Psoas muscle (tissue), 8 donors: ENCODE measurements at regions of chr5 and their contacts with region 1.

Region 1: DNA sequence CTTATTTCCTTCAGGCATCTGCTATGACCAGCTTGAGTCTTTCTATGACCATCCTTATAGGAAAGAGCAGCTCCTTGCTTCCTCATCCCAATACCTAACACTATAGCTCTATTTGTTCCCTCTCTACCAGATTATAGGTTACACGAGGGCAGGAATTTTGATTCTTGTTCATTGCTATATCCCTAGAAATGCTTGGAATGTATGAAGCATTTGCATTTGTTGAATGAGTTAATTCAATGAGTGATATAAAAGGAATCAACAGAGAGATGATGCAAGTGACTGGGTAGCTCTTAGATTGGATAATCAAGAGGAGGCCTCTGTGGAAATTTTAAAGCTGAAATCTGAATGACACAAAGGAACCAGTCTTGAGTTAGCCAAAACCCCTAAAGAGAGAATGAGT is 13.9 kb downstream of the ZCCHC9 start:
- DNase-seq: no peak
- ATAC-seq: no peak
- H3K4me3 ChIP-seq: no peak overlapping the region
- H3K27ac ChIP-seq: no peak overlapping the region
- H3K4me1 ChIP-seq: no peaks in the 10 kb centered on the region
- H3K27me3 ChIP-seq: no peaks in the 10 kb centered on the region
- CTCF ChIP-seq: no peak

Region 2: DNA sequence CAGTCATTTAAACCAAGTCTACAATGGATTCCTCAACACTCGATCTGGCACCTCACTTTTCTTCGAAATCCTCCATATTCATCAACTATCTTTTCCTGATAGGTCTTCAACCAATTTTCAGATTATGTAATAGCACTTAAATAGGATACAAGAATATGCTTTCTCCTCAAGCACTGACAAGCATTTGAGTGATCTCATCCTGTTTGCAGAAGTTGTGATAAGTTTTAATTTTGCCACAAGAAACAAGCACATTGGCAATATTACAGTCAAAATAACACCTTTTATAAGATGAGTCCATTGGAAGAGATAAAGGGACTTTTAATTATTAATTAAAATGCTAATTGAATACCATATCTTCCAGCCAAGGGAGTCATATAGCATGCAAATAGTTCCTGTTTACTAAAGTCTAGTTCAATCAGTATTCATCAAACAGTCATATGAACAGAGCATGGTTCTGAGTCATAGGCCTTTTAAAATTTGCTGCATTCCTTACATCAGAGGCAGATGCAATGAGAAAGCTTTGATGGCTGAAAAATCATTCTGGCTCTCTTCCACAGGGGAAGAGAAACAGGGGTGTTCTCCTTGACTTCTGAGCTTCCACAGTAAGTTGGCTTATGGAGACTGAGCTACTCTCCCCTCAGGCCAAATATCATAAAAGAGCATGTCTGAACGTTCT is 46.7 kb before region 1 on chr5:
- intact Hi-C with region 1: loop called in 1 of 2 experiments (anchors 1 kb)
- DNase-seq: no peak
- ATAC-seq: peak in 2 of 4 donors; percentile 10 to 18
- H3K4me3 ChIP-seq: no peak overlapping the region
- H3K27ac ChIP-seq: no peak overlapping the region
- H3K4me1 ChIP-seq: no peaks in the 10 kb centered on the region
- H3K27me3 ChIP-seq: no peaks in the 10 kb centered on the region
- CTCF ChIP-seq: no peak

Region 3: GRCh38 chr5:81371354-81371876 is 56.1 kb after region 1 on chr5:
- intact Hi-C with region 1: no loop called
- DNase-seq: no peak
- ATAC-seq: no peak
- H3K4me3 ChIP-seq: no peak overlapping the region
- H3K27ac ChIP-seq: no peak overlapping the region
- H3K4me1 ChIP-seq: no peaks in the 10 kb centered on the region
- H3K27me3 ChIP-seq: no peaks in the 10 kb centered on the region
- CTCF ChIP-seq: no peak

Region 4: GRCh38 chr5:81924442-81924841 is 609.1 kb after region 1 on chr5:
- intact Hi-C with region 1: no loop called
- DNase-seq: no peak
- ATAC-seq: no peak
- H3K4me3 ChIP-seq: no peak overlapping the region
- H3K27ac ChIP-seq: no peak overlapping the region
- H3K4me1 ChIP-seq: no peaks in the 10 kb centered on the region
- H3K27me3 ChIP-seq: no peaks in the 10 kb centered on the region
- CTCF ChIP-seq: no peak